Cardiac septum (tissue), 1 donor: ENCODE measurements at regions of chr10 and their contacts with region 1.

Region 1: GRCh38 chr10:51074238-51075028 is at the start of gene PRKG1:
- DNase-seq: peak; percentile 84
- total RNA-seq, gene PRKG1: 35.6 TPM

Region 2: DNA sequence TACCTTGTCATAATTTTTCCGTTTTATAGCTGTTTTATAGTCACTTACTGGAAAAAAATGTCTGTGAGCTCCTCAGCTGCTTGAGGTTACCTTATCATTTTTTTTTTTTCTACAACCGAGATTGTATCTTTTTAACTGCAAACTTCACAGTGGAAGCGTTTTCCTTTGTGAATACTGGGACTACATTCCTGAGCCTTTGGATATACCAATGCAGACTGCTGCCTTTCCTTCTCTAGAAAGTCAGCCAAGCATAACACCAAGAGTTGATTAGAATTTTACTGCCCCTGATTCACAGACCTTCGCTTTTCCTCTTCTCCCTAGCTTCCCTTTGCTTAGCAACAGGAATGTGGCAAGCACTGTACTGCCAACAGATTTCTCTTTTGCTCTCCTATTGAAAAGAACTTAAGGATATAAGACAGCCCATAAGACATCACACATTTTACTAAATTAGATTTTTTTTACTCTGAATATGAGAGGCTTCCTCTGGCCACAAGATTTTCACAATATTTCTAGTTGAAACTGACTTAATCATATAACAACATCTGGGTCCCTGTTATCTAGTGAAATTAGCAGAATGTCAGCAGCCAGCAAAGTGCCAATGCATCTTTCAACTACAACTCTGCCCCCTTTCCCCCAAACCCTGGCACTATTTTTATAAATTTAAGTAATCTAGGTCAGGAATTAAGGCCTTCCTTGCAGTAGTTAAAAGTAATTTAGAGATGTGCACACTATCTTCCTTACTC is 170.5 kb after region 1 on chr10:
- intact Hi-C with region 1: loop called (anchors 10 kb)
- DNase-seq: no peak

Region 3: GRCh38 chr10:51321976-51322375 is 247.5 kb after region 1 on chr10:
- intact Hi-C with region 1: no loop called
- DNase-seq: no peak

Region 4: DNA sequence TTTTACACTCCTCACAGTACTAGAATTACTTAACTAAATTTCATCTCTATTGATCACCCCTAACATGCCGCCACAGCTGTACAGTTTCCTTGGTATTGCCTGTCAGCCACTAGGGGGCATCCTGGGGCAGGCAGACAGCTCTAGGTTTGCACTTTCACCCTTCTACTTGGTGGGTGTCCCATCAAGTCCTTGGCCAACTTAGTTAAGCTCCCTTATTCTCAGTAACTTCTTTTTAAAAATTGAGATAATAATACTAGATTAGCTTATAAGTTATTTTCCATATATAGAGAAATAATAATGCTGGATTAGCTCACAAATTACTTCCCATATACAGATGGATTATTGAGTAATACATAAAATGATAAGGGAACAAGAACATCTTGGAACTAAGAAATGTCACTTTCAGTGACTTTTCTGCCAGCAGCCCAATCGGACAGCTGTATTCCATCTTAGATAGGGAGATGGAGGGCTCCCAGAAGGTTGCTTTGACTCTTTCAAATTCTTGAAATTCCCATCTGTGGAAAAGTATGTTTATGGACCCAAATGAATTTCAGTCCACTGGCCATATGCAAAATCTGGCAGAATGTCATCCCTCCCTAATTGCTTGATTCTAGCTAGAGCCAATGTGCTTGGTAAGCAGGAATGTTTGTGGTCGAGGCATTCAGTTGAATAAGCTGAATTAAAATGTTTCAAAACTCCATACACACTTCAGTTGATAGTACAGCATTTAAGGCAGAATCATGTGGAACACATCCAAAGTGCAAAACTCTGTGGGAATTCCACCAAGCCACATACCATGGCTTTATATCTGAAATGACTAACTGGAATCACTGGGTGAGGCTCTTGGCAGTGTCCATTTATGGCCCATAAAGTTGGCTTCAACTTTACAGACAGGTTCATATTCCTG is 315.2 kb after region 1 on chr10:
- intact Hi-C with region 1: loop called (anchors 10 kb)
- DNase-seq: no peak

Region 5: DNA sequence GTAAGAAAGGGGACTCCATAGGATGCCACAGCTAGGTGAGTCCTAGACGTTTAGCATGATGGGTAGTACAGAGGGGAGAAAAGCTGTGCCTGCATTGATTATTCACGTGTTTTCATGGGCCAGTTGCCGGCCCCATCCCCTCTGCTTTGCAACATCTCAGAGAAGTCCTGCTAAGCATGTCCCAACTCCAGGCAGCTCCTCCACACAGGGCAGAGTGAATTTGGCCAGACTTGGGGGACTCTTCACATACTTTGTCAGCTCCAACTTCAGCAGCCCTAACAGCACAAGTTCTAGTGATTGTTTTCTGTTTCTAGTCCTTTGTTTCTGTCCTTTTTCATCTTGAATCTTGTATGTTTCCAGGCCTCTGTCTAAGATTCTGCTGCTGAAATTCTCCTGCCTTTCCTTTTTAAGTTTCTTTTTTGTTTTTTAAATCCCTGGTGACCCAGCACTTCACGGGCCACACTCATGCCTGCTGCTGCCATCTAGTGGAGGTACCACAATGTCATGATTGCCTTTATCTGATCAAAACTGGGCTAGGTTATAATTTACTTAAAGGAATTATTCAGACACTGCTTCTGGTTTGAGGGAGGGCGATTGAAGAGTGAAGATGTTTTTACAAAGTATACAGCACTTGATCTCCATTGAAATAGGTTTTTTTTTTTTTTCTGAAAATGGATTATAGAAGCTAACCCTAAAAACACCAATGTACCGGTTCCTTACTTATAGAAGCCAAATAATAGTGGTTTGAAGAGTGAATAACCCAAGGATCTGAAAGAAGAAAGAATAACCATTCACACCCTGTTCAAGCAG is 348.1 kb after region 1 on chr10:
- intact Hi-C with region 1: loop called (anchors 2 kb)
- DNase-seq: no peak